Naive thymus-derived CD8-positive, alpha-beta T cell (primary cell): ENCODE measurements at regions of chr13 and their contacts with region 1.

Region 1: GRCh38 chr13:20160847-20161274 is at the start of gene GJA3:
- DNase-seq: peak; percentile 40 to 83 (median 73)
- ATAC-seq: peak; percentile 73 to 75
- H3K4me3 Mint-ChIP-seq: peak within 1 kb of the TSS; percentile 84 to 92 (median 90)
- H3K27ac Mint-ChIP-seq: peak within 1 kb of the TSS in 9 of 10 donors; percentile 6 to 94 (median 81)
- H3K4me1 Mint-ChIP-seq: peaks cover 9 to 22% (median 21%) of the 10 kb centered on the region in 4 donors
- H3K27me3 Mint-ChIP-seq: peaks cover 2 to 32% (median 3%) of the 10 kb centered on the region in 5 donors
- polyA plus RNA-seq, gene GJA3: 0.19 to 0.54 (median 0.47) TPM

Region 2: DNA sequence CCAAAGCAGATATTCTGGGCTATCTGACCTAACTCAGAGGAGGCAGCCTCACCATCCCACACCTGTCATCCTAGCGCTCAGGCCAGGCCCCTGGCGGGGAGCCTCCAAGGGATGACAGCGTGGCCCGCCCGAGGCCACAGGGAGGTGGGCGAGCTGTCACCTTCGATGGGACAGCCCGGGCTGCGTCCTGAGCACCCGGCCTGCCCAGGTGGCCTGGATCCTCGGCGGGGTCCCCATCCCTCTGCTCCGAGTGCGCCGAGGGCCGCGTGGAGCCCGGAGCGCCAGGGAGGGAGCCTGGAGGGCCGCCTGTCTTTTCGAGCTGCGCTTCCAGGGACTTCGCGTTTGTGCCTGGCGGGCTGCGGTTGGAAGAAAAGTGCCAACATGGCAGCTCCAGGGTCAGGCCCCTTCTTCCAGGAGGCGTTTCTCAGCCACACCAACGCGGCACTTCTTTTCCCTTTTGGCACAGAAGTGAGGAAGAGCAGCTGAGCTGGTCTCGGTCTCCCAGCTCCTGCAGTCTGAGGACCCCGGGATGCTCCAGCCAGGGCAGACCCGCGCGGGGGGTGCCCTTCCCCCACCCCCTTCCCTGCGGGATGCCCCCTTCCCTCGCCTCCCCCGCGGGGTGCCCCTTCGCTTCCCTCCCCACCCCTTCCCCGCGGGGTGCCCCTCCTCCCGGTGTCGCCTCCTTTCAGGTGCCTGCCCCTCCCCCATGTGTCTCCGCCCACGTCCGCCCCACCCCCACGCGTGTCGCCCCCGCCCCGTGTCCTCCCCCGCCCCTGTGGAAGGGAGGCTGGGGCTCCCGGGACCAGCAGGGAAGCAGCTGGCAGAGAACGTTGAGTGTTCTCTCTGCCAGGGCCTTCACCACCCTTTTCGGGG is 42.4 kb before region 1 on chr13:
- POLR2A ChIA-PET with region 1: interaction called, 30 read pairs
- DNase-seq: peak in 7 of 10 donors; percentile 18 to 80 (median 28)
- ATAC-seq: peak; percentile 1 to 44
- H3K4me3 Mint-ChIP-seq: peak overlapping the region; percentile 81 to 94 (median 90)
- H3K27ac Mint-ChIP-seq: peak overlapping the region; percentile 67 to 97 (median 89)
- H3K4me1 Mint-ChIP-seq: peaks cover 14 to 28% (median 16%) of the 10 kb centered on the region in 4 donors
- H3K27me3 Mint-ChIP-seq: peaks cover 0 to 4% (median 0%) of the 10 kb centered on the region in 5 donors

Region 3: DNA sequence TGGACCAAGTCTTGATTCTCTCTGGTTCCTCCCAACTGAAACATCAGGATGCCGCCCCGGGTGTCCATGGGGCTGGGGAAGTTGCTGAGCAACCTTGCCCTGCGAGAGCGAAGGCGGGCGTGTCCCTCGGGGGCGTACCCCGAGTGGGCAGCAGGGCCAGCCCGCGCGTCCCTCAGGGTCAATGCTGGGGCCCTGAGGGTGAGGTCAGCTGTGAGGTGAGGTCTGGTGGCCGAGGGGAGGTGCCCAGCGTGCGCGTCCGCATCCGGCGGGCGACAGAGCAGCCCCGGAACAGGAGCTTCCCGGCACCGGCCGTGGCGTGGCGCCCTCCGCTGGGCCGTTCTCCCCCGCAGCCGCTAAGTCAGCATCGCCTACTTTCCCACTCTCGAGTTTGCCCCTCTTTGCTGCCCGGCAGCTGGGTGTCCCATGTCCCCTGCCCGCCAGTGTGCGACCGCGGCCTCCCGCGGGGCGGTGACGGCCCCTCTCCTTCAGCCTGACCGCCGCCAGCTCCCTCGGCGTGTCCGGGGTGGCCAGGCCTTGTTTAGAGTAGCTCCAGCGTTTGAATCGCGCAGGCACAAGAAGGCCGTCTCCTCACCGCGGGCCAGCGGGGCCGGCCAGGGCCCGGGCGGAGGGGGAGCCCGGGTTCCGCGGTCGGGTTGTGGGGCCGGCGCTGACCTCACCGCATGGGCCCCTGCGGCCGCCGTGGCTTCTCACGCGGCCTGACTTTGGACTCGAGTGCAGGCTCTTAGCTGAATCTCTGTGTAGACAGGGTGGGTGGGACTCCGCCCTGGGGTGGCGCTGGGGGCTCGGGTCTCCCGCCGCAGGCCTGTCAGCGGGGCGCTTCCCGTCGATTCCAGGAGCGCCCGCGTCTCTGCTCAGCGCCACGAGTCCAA is 33.0 kb before region 1 on chr13:
- POLR2A ChIA-PET with region 1: interaction called, 10 read pairs
- DNase-seq: peak in 7 of 10 donors; percentile 22 to 47 (median 40)
- ATAC-seq: peak; percentile 77 to 78
- H3K4me3 Mint-ChIP-seq: peak overlapping the region; percentile 59 to 77 (median 72)
- H3K27ac Mint-ChIP-seq: peak overlapping the region in 1 of 10 donors; percentile 38
- H3K4me1 Mint-ChIP-seq: peaks cover 0 to 6% (median 4%) of the 10 kb centered on the region in 4 donors
- H3K27me3 Mint-ChIP-seq: peaks cover 8 to 23% (median 12%) of the 10 kb centered on the region in 5 donors